Activated naive CD4-positive, alpha-beta T cell treated with anti-CD3 and anti-CD28 coated beads for 36 hours (primary cell): ENCODE measurements at regions of chr12 and their contacts with region 1.

Region 1: DNA sequence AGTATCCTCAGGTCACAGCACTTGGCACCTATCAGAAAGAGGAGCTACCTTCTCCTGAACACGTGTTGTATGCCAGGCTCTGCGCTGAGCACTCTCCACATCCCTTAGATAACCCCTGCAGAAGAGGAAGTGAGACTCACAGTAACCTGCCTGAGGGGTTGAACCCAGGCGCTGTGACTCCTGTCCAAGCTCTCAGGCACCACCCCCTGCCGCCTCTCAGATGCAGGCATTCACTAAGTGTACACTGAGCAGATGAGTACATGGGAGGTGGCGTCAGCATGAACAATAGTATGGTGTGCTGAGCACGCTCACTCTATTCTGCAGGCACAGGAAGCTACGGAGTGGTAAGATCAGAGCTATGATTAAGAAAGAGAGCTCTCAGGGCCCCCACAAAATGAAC is 21.0 kb upstream of the RIC8B start:
- DNase-seq: peak; percentile 90
- H3K4me3 Mint-ChIP-seq: peak overlapping the region; percentile 46
- H3K27ac Mint-ChIP-seq: peak overlapping the region; percentile 68
- H3K4me1 Mint-ChIP-seq: peaks cover 30% of the 10 kb centered on the region
- H3K27me3 Mint-ChIP-seq: no peaks in the 10 kb centered on the region

Region 2: DNA sequence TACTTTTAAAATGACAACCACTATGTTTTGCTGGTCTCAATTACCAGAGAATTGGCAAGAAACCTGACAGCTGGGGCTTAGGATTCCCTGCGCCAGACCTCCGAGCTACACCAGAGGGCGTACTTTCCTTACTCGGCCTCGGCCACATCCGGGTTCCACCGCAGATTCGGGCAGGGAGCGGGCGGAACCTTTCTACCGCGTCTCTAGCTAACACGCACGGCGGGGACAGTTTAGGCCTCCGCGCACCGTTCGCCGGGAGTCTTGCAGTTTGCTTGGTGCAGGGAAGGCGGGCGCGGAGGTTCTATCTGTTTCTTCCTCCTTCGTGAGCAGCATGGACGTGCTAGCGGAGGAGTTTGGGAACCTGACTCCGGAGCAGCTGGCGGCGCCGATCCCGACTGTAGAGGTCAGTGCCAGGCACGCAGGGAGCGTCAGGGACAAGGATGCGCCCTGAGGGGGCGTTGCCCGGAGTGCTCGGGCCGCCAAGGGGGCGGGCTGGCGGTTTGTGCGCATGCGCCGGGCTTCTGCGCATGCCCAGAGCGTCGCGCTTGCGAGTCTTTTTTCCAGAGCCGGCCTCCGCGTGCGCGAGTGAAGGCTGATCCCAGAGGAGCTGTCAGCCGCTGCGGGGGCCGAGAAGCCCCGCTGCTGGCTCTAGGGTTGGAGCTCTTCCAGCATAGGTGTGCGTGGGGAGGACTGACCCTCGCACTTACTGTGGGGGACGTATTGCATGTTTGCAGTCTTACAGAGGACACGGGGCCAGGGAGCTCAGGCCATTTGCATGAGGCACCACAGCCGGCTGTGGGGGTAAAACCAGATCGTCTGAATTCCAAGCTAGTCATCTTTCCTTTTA is 395.8 kb before region 1 on chr12 and contains the start of gene POLR3B:
- CTCF ChIA-PET with region 1: no interaction called
- intact Hi-C with region 1: loop called (anchors 5 kb)
- DNase-seq: peak; percentile 97
- H3K4me3 Mint-ChIP-seq: peak within 1 kb of the TSS; percentile 92
- H3K27ac Mint-ChIP-seq: peak within 1 kb of the TSS; percentile 89
- H3K4me1 Mint-ChIP-seq: peaks cover 11% of the 10 kb centered on the region
- H3K27me3 Mint-ChIP-seq: no peaks in the 10 kb centered on the region
- total RNA-seq, gene POLR3B: 6.4 to 6.8 TPM

Region 3: GRCh38 chr12:106527356-106527755 is 226.2 kb before region 1 on chr12:
- CTCF ChIA-PET with region 1: no interaction called
- intact Hi-C with region 1: no loop called
- DNase-seq: no peak
- H3K4me3 Mint-ChIP-seq: no peak overlapping the region
- H3K27ac Mint-ChIP-seq: no peak overlapping the region
- H3K4me1 Mint-ChIP-seq: no peaks in the 10 kb centered on the region
- H3K27me3 Mint-ChIP-seq: peaks cover 4% of the 10 kb centered on the region

Region 4: DNA sequence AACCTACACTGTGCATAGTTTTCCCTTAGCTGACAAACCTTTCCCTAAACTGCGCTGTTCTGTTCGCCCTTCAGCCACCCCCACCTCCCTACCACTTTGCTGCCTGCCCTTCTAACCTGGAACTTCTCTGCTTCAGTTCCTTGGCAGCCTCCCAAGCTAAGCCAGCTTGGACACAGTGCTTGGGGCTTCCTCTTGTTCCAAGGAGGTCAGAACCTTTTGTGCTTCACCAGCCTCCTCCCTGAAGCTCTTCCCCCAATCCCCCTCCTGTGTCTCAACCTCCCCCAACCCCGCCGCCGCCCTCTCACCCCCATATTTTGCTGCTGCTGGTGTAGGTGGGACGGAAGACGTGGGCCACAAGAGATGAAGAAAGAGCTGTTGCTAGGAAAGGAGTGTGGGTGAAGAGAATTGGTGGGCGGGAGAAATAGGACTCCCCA is 12.9 kb after region 1 on chr12:
- CTCF ChIA-PET with region 1: no interaction called
- intact Hi-C with region 1: loop called (anchors 2 kb)
- DNase-seq: no peak
- H3K4me3 Mint-ChIP-seq: peak overlapping the region; percentile 2
- H3K27ac Mint-ChIP-seq: no peak overlapping the region
- H3K4me1 Mint-ChIP-seq: peaks cover 28% of the 10 kb centered on the region
- H3K27me3 Mint-ChIP-seq: no peaks in the 10 kb centered on the region

Region 5: DNA sequence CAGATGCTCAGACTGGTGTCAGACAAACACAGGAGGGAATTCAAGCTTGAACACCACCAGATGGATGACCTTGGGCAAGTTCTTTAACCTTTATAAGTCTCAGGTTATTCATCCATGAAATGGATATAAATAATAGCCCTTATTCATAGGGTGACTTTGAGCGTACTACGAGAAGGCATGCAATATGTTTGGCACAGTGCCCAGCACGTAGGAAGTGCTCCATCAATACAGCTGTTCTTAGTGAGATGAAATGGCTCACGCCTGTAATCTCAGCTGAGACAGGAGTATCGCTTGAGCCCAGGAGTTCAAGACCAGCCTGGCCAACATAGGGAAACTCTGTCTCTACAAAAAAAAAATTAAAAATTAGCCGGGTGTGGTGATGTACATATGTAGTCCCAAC is 1676.7 kb after region 1 on chr12:
- CTCF ChIA-PET with region 1: no interaction called
- intact Hi-C with region 1: no loop called
- DNase-seq: no peak
- H3K4me3 Mint-ChIP-seq: no peak overlapping the region
- H3K27ac Mint-ChIP-seq: no peak overlapping the region
- H3K4me1 Mint-ChIP-seq: no peaks in the 10 kb centered on the region
- H3K27me3 Mint-ChIP-seq: peaks cover 6% of the 10 kb centered on the region